Aorta (tissue), 5 donors: ENCODE measurements at regions of chr12 and their contacts with region 1.

Region 1: GRCh38 chr12:96516472-96517430 is 27.4 kb downstream of the CFAP54 start:
- DNase-seq: peak; percentile 82 to 88
- ATAC-seq: peak; percentile 74
- H3K4me3 ChIP-seq: no peak overlapping the region
- H3K27ac ChIP-seq: no peak overlapping the region
- H3K4me1 ChIP-seq: no peaks in the 10 kb centered on the region
- H3K27me3 ChIP-seq: no peaks in the 10 kb centered on the region

Region 2: GRCh38 chr12:96061864-96062453 is 454.8 kb before region 1 on chr12:
- intact Hi-C with region 1: loop called (anchors 2 to 5 kb)
- DNase-seq: peak; percentile 81 to 83
- ATAC-seq: peak; percentile 90
- H3K4me3 ChIP-seq: no peak overlapping the region
- H3K27ac ChIP-seq: no peak overlapping the region
- H3K4me1 ChIP-seq: no peaks in the 10 kb centered on the region
- H3K27me3 ChIP-seq: no peaks in the 10 kb centered on the region

Region 3: GRCh38 chr12:96108321-96108720 is 408.4 kb before region 1 on chr12:
- intact Hi-C with region 1: no loop called
- DNase-seq: peak in 1 of 2 donors; percentile 71
- ATAC-seq: no peak
- H3K4me3 ChIP-seq: no peak overlapping the region
- H3K27ac ChIP-seq: no peak overlapping the region
- H3K4me1 ChIP-seq: peaks cover 0 to under 1% of the 10 kb centered on the region in 2 donors
- H3K27me3 ChIP-seq: no peaks in the 10 kb centered on the region

Region 4: GRCh38 chr12:96208801-96209549 is 307.8 kb before region 1 on chr12:
- intact Hi-C with region 1: loop called (anchors 5 to 10 kb)
- DNase-seq: no peak
- ATAC-seq: no peak
- H3K4me3 ChIP-seq: no peak overlapping the region
- H3K27ac ChIP-seq: no peak overlapping the region
- H3K4me1 ChIP-seq: no peaks in the 10 kb centered on the region
- H3K27me3 ChIP-seq: no peaks in the 10 kb centered on the region

Region 5: DNA sequence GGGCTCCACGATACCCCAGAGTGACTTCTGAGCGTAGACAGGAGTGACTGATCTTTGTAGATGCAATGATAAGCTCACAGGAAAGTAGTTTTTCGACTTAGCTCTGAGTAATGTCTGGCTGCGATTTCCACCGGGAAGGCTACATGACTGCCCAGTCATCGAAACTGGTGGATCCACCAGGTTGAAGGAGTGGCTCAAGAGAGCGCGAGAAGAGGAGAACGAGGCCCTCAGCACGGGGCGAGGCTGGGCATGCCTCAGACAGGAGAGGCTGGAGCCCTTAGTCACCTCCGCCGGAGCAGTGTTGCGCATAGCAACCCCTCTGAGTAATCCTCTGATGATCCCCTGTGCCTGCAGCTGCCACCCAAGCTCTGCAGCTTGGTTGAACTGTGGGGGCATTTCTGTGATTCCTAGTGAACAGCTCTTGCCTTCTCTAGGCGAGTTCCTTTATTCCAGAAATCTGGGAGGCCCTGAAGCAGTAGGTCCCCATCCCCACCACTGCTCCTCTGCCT is 297.0 kb before region 1 on chr12:
- intact Hi-C with region 1: loop called (anchors 5 to 10 kb)
- DNase-seq: peak; percentile 59 to 75
- ATAC-seq: no peak
- H3K4me3 ChIP-seq: no peak overlapping the region
- H3K27ac ChIP-seq: no peak overlapping the region
- H3K4me1 ChIP-seq: no peaks in the 10 kb centered on the region
- H3K27me3 ChIP-seq: no peaks in the 10 kb centered on the region

Region 6: GRCh38 chr12:96471368-96472050 is 45.2 kb before region 1 on chr12:
- intact Hi-C with region 1: no loop called
- DNase-seq: no peak
- ATAC-seq: no peak
- H3K4me3 ChIP-seq: no peak overlapping the region
- H3K27ac ChIP-seq: no peak overlapping the region
- H3K4me1 ChIP-seq: no peaks in the 10 kb centered on the region
- H3K27me3 ChIP-seq: peaks cover 0 to 2% of the 10 kb centered on the region in 2 donors

Region 7: DNA sequence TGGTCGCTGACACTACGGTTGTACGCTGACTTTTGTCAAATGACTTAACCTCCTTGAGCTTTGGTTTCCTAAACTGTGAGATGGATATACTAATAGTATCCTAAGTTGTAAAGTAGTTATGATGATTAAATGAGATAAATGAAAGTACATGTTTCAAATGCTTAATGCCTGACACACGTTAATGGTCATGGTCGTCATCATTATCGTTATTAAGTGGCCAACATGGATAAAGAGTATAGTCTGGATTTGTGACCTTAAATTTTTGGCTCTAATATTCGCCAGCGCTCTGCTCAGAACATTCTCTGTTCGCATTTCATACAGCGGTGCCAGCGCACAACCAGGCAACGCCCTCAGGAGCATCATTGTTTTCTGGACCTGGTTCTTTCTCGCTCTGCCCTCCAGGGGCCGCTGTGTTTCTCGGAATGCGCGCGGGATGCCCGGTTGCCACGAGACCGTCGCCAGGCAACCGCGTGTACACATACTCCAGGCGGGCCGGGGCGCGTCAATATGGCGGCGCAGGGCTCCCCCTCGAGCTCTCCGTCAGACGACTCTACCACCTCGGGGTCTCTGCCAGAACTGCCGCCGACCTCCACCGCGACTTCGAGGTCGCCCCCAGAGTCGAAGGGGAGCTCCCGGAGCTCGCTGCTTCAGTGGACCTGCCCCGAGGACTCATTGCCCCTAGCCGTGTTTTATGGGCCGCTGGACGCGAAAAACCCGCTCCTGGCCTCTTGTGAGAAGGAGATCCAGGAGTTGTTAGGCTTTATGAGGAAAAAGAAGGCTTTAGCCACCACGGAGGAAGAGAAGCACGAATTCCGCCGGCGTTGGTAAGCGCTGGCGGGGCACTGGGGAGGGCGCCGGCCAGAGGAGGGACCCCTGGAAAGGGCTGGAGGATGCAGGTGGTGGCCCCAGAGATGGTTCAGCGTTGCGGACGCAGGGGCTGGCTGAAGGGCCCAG is 27.4 kb before region 1 on chr12 and contains the start of gene CFAP54:
- intact Hi-C with region 1: loop called in 1 of 2 experiments (anchors 1 kb)
- DNase-seq: peak; percentile 96 to 98
- ATAC-seq: peak; percentile 98
- H3K4me3 ChIP-seq: peak within 1 kb of the TSS; percentile 47 to 72
- H3K27ac ChIP-seq: peak within 1 kb of the TSS in 1 of 2 donors; percentile 73
- H3K4me1 ChIP-seq: no peaks in the 10 kb centered on the region
- H3K27me3 ChIP-seq: no peaks in the 10 kb centered on the region
- total RNA-seq, gene CFAP54: 0.91 to 2.2 TPM